ENCODE measurements at regions of chr7 and their contacts with region 1.

Region 1: DNA sequence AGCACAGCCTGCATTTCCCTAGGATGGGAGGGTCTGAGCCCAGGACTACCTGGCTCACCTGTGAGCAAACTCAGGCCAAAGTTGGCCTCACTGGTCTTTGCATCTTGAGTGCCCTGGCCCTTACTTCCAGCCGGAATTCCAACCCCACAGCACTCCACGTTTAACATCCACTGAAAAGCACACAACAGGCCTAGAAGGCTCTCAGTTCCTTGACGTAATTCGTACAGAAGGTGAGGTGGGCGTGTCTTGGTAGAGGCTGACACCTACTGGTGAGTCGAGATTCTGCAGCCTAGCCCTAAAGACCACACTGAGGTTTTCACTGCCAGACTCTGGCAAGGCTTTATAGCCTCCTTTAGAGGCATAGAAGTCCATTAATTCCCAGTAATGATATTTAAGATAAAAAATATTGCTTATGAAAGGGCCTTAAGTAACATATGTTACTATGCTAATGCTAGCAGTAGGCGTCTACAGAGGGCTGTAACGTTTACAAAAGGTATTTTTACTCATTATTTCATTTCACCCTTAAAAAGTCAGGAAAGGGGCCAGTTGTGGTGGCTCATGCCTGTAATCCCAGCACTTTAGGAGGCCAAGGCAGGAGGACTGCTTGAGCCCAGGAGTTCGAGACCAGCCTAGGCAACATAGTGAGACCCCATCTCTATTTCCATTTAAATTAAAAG is 95.8 kb downstream of the HIP1 start:
- DNase-seq: peak in 1 of 10 donors; percentile 79

Region 2: GRCh38 chr7:75599244-75599781 is 43.6 kb before region 1 on chr7:
- intact Hi-C with region 1: loop called (anchors 1 kb)
- DNase-seq: peak; percentile 89 to 99 (median 93)

Region 3: GRCh38 chr7:75738987-75739795 is 96.2 kb after region 1 on chr7:
- intact Hi-C with region 1: loop called (anchors 10 kb)
- DNase-seq: peak; percentile 99 to 100 (median 100)

Measured in posterior cingulate gyrus (tissue), 11 donors.